ENCODE measurements at regions of chr9 and their contacts with region 1.

Region 1: GRCh38 chr9:1009101-1009707 is 32.7 kb downstream of the DMRT3 start:
- DNase-seq: peak; percentile 60
- ATAC-seq: peak; percentile 99
- H3K4me3 ChIP-seq: no peak overlapping the region
- H3K27ac ChIP-seq: no peak overlapping the region
- H3K4me1 ChIP-seq: no peaks in the 10 kb centered on the region
- H3K27me3 ChIP-seq: peaks cover 0 to 8% of the 10 kb centered on the region in 2 experiments; a peak in 1 of 5 replicates
- CTCF ChIP-seq: peak; percentile 94
- EP300 ChIP-seq: no peak
- POLR2A ChIP-seq: no peak
- RAD21 ChIP-seq: peak; percentile 81

Region 2: GRCh38 chr9:347667-348292 is 661.4 kb before region 1 on chr9:
- CTCF ChIA-PET with region 1: interaction called, 4 read pairs
- POLR2A ChIA-PET with region 1: no interaction called
- in situ Hi-C with region 1: no loop called
- intact Hi-C with region 1: loop called (anchors 5 kb)
- DNase-seq: peak; percentile 29
- ATAC-seq: peak; percentile 79
- H3K4me3 ChIP-seq: no peak overlapping the region
- H3K27ac ChIP-seq: no peak overlapping the region
- H3K4me1 ChIP-seq: no peaks in the 10 kb centered on the region
- H3K27me3 ChIP-seq: 0 out of 5 replicates have a peak, but pooled peaks cover 0 to 4% of the 10 kb centered on the region in 2 experiments
- CTCF ChIP-seq: peak; percentile 70
- EP300 ChIP-seq: no peak
- POLR2A ChIP-seq: no peak
- RAD21 ChIP-seq: peak; percentile 45; the same call in 1 of the 2 replicates

Region 3: DNA sequence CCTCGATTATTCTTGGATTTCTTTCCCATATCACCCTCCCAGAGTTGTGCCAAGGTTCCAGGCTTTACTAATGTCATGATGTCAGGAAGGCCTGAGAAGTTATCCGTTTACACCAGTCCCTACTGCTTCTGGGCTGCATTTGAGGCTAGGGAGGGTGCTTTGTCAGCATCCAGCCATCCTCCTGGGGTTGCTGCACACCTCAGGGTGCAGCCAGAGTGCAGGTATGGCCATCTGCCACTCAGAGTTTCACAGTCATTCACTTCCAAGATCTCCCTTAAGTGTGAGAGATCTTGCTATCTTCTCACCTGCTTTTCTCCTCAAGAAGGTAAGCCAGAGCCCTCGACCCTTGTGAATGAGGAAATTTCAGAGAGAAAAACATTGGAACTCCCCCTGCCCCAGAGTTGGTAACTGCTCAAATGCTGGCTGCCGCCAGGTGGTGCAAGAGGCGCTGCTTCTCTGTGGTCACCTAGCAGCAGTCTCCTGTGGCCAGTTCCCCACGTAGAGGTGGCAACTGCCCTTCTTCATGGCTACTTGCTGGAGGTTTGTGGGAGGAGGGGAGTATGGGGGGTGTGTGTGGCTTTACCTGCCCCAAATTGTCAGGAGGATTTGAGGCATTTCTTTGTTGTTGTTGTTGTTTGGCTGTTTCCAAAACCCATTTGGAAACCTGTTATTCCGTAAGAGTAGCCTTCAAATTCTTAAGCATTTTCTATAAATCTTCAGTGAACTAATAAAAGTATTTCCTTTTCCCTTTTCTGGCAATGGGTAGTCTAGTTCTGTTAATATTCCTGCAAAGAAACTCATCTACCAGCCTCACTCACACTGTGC is 427.3 kb before region 1 on chr9:
- CTCF ChIA-PET with region 1: interaction called, 3 read pairs
- POLR2A ChIA-PET with region 1: no interaction called
- in situ Hi-C with region 1: no loop called
- intact Hi-C with region 1: loop called (anchors 10 kb)
- DNase-seq: peak; percentile 41
- ATAC-seq: peak; percentile 100
- H3K4me3 ChIP-seq: no peak overlapping the region
- H3K27ac ChIP-seq: no peak overlapping the region
- H3K4me1 ChIP-seq: 0 out of 2 replicates have a peak, but pooled peaks cover 5% of the 10 kb centered on the region
- H3K27me3 ChIP-seq: no peaks in the 10 kb centered on the region
- CTCF ChIP-seq: peak; percentile 85
- EP300 ChIP-seq: no peak
- POLR2A ChIP-seq: no peak
- RAD21 ChIP-seq: peak; percentile 82

Region 4: GRCh38 chr9:893843-894420 is 115.3 kb before region 1 on chr9:
- CTCF ChIA-PET with region 1: interaction called, 29 read pairs
- POLR2A ChIA-PET with region 1: no interaction called
- in situ Hi-C with region 1: loop called (anchors 5 kb)
- intact Hi-C with region 1: loop called (anchors 1 kb)
- DNase-seq: peak; percentile 56
- ATAC-seq: peak; percentile 95
- H3K4me3 ChIP-seq: no peak overlapping the region
- H3K27ac ChIP-seq: no peak overlapping the region
- H3K4me1 ChIP-seq: no peaks in the 10 kb centered on the region
- H3K27me3 ChIP-seq: peaks cover 0 to 6% of the 10 kb centered on the region in 2 experiments; a peak in 2 of 5 replicates
- CTCF ChIP-seq: peak; percentile 82
- EP300 ChIP-seq: no peak
- POLR2A ChIP-seq: no peak
- RAD21 ChIP-seq: peak; percentile 47; the same call in 1 of the 2 replicates

Region 5: DNA sequence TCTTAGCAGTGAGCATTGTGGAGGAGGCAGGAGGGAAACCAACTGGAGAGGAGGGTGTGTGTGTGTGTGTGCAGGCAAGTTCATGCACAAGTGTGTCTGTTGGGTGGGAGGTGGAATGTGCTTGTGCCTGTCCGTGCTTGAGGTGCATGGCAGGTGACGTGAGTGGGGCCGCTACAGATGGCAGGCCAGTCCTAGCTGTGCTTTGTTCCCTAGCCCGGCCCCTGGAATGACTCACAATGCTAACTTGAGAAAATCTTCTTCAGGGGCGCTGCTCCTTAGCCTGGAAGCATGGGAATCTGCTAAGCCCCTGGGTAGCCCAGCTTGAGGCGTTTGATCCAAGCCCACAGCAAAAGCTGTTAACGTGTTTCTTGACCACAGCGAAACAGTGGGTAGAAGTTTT is 15.9 kb after region 1 on chr9:
- CTCF ChIA-PET with region 1: no interaction called
- POLR2A ChIA-PET with region 1: no interaction called
- in situ Hi-C with region 1: no loop called
- intact Hi-C with region 1: no loop called
- DNase-seq: no peak
- ATAC-seq: no peak
- H3K4me3 ChIP-seq: no peak overlapping the region
- H3K27ac ChIP-seq: no peak overlapping the region
- H3K4me1 ChIP-seq: no peaks in the 10 kb centered on the region
- H3K27me3 ChIP-seq: peaks cover 1 to 9% of the 10 kb centered on the region in 2 experiments; a peak in 1 of 5 replicates
- CTCF ChIP-seq: no peak
- EP300 ChIP-seq: no peak
- POLR2A ChIP-seq: no peak
- RAD21 ChIP-seq: no peak

Measured in HepG2 (cell line).